ENCODE measurements at regions of chr4 and their contacts with region 1.

Region 1: DNA sequence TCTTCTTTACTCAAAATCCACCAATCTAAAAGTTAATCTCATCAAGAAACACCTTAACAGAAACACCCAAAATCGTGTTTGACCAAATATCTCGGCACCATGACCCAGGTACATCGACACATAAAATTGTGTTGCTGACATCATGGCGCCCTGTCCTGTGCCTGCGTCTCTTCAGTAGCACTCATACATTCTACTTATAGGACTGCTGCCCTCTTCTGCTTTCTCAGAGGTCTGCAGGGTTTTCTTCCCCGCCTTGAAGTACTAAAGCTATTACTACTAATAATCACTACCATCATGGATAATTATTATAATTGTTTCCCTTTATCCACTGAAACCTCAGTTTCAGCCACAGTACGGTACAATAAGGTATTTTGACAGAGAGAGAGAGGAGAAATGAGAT is 1403.1 kb upstream of the TENM3 start:
- DNase-seq: no peak
- CTCF ChIP-seq: no peak

Region 2: DNA sequence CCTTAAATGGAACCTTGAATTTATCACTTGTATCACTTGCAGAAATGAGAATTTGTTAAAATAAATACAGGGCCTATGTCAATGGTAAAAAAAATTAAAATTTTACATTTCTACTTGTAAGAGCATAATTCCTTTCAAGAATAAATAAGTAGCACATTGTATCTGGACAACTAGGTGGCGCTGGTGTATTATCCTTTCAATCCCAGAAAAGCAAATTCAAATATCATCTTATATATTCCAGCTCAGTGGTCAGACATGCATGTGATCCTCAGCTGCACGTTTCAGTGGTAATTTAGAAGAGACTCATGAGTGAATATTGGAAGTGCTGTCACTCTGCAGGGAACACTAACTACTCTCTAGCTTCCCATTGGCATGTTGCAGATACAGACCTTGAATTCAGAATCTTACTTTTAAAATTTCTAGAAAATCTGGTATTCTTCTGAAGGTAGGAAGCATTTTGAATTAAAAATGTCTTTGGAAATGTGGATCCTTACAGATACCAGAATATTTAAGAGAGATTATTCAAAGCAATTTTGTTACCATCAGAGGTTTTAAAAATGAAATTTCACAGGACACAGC is 11.6 kb before region 1 on chr4:
- CTCF ChIA-PET with region 1: interaction called, 11 read pairs
- POLR2A ChIA-PET with region 1: no interaction called
- DNase-seq: no peak
- CTCF ChIP-seq: peak; percentile 55